CD4-positive, alpha-beta memory T cell (primary cell): ENCODE measurements at regions of chr5 and their contacts with region 1.

Region 1: DNA sequence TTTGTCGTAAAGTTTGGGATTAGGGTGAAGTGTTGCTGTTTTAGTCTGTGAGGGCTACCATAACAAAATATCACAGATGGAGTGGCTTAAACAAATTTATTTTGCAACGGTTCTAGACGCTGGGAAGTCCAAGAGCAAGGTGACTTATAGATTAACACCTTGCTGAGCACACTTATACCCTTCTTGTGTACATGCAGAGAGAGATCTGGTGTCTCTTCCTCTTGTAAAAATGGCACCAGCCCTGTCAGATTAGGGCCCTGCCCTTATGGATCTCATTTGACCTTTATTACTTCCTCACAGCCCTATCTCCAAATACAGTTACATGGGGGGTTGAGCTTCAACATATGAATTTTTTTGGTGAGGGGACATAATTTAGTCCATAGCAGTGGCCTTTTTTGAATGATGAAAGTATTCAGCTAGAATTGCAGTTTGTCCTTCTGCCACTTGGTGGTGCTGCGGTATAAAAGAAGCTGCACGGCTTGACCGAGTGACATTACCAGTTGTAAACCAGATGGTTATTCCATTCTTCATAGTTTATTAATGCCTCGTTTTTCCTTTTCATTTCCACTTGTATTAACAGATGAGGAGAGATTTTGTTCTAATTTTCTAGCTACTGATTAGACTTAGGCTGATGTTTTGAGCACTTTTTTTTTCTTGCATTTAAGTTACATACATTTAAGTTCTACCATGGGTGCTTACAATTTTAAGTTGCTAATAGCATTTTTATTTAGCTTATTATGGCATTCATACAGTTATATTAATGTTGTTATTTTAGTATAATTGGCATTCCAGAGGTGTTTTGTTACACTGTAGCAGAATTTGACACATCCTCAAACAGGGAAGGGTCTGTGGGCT is 19.4 kb downstream of the DCP2 start:
- DNase-seq: peak; percentile 65 to 76 (median 71)
- H3K4me3 ChIP-seq: no peak overlapping the region
- H3K4me3 Mint-ChIP-seq: peak overlapping the region in 2 of 8 donors; percentile 19 to 57
- H3K27ac ChIP-seq: no peak overlapping the region
- H3K27ac Mint-ChIP-seq: peak overlapping the region in 5 of 7 donors; percentile 1 to 52 (median 17)
- H3K4me1 ChIP-seq: peaks cover 11% of the 10 kb centered on the region
- H3K4me1 Mint-ChIP-seq: peaks cover 20 to 41% (median 25%) of the 10 kb centered on the region in 4 donors
- H3K27me3 ChIP-seq: no peaks in the 10 kb centered on the region
- H3K27me3 Mint-ChIP-seq: no peaks in the 10 kb centered on the region

Region 2: GRCh38 chr5:112983363-112983762 is 12.6 kb before region 1 on chr5:
- CTCF ChIA-PET with region 1: interaction called, 51 read pairs
- POLR2A ChIA-PET with region 1: interaction called, 5 read pairs
- intact Hi-C with region 1: no loop called
- DNase-seq: no peak
- H3K4me3 ChIP-seq: no peak overlapping the region
- H3K4me3 Mint-ChIP-seq: no peak overlapping the region
- H3K27ac ChIP-seq: no peak overlapping the region
- H3K27ac Mint-ChIP-seq: peak overlapping the region in 4 of 7 donors; percentile 10 to 61 (median 22)
- H3K4me1 ChIP-seq: peaks cover 59% of the 10 kb centered on the region
- H3K4me1 Mint-ChIP-seq: peaks cover 49 to 74% (median 62%) of the 10 kb centered on the region in 4 donors
- H3K27me3 ChIP-seq: no peaks in the 10 kb centered on the region
- H3K27me3 Mint-ChIP-seq: no peaks in the 10 kb centered on the region

Region 3: DNA sequence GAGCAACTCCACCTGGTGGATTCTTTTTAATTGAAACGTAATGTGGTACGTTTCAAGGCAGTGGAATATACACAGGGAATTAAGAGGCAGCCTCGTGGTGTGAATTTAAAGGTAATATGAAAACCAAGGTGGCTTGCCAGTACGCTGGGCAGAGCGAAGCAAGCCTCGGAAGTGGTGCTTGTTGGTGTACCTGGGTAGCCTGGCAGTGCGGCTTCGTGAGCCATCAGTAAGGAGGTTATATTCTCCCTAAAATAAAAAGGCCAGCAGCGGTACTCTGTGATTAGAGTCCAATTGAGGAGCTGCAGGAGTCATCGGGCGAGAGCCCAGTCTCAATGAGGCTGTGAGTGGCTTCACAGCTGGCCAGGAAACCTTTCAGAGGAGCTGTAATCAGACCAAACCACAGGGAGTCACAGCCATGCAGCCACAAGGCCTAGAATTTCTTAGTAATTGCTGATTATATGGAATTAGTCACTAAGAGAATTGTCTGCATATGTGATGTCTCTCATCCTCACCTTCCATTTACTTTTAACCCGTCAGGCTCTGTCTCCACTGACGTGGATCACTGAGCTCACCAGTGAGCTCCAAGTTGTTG is 38.3 kb after region 1 on chr5:
- CTCF ChIA-PET with region 1: interaction called, 18 read pairs
- POLR2A ChIA-PET with region 1: interaction called, 3 read pairs
- intact Hi-C with region 1: loop called (anchors 5 kb)
- DNase-seq: no peak
- H3K4me3 ChIP-seq: no peak overlapping the region
- H3K4me3 Mint-ChIP-seq: no peak overlapping the region
- H3K27ac ChIP-seq: no peak overlapping the region
- H3K27ac Mint-ChIP-seq: peak overlapping the region in 2 of 7 donors; percentile 60 to 67
- H3K4me1 ChIP-seq: no peaks in the 10 kb centered on the region
- H3K4me1 Mint-ChIP-seq: peaks cover 8 to 26% (median 19%) of the 10 kb centered on the region in 4 donors
- H3K27me3 ChIP-seq: no peaks in the 10 kb centered on the region
- H3K27me3 Mint-ChIP-seq: no peaks in the 10 kb centered on the region

Region 4: GRCh38 chr5:113075019-113075418 is 79.0 kb after region 1 on chr5:
- CTCF ChIA-PET with region 1: interaction called, 24 read pairs
- POLR2A ChIA-PET with region 1: interaction called, 3 read pairs
- intact Hi-C with region 1: no loop called
- DNase-seq: no peak
- H3K4me3 ChIP-seq: no peak overlapping the region
- H3K4me3 Mint-ChIP-seq: no peak overlapping the region
- H3K27ac ChIP-seq: no peak overlapping the region
- H3K27ac Mint-ChIP-seq: no peak overlapping the region
- H3K4me1 ChIP-seq: no peaks in the 10 kb centered on the region
- H3K4me1 Mint-ChIP-seq: peaks cover 7 to 32% (median 20%) of the 10 kb centered on the region in 4 donors
- H3K27me3 ChIP-seq: no peaks in the 10 kb centered on the region
- H3K27me3 Mint-ChIP-seq: no peaks in the 10 kb centered on the region

Region 5: GRCh38 chr5:113330533-113331208 is 334.7 kb after region 1 on chr5:
- CTCF ChIA-PET with region 1: interaction called, 245 read pairs
- POLR2A ChIA-PET with region 1: interaction called, 9 read pairs
- intact Hi-C with region 1: loop called (anchors 1 kb)
- DNase-seq: peak; percentile 41 to 69 (median 65)
- H3K4me3 ChIP-seq: no peak overlapping the region
- H3K4me3 Mint-ChIP-seq: peak overlapping the region in 6 of 8 donors; percentile 0 to 49 (median 30)
- H3K27ac ChIP-seq: no peak overlapping the region
- H3K27ac Mint-ChIP-seq: peak overlapping the region in 3 of 7 donors; percentile 43 to 81 (median 77)
- H3K4me1 ChIP-seq: peaks cover 11% of the 10 kb centered on the region
- H3K4me1 Mint-ChIP-seq: peaks cover 10 to 20% (median 12%) of the 10 kb centered on the region in 4 donors
- H3K27me3 ChIP-seq: no peaks in the 10 kb centered on the region
- H3K27me3 Mint-ChIP-seq: no peaks in the 10 kb centered on the region

Region 6: GRCh38 chr5:113513384-113514288 is 517.6 kb after region 1 on chr5 and contains the start of gene YTHDC2:
- CTCF ChIA-PET with region 1: interaction called, 44 read pairs
- POLR2A ChIA-PET with region 1: no interaction called
- intact Hi-C with region 1: loop called (anchors 1 kb)
- DNase-seq: peak; percentile 86 to 89 (median 87)
- H3K4me3 ChIP-seq: peak within 1 kb of the TSS; percentile 53 to 68
- H3K4me3 Mint-ChIP-seq: peak within 1 kb of the TSS; percentile 93 to 97 (median 96)
- H3K27ac ChIP-seq: peak within 1 kb of the TSS; percentile 84
- H3K27ac Mint-ChIP-seq: peak within 1 kb of the TSS; percentile 88 to 98 (median 97)
- H3K4me1 ChIP-seq: peaks cover 32% of the 10 kb centered on the region
- H3K4me1 Mint-ChIP-seq: peaks cover 25 to 44% (median 34%) of the 10 kb centered on the region in 4 donors
- H3K27me3 ChIP-seq: no peaks in the 10 kb centered on the region
- H3K27me3 Mint-ChIP-seq: peaks cover 4 to 7% of the 10 kb centered on the region in 2 donors
- total RNA-seq, gene YTHDC2: 42.8 to 46.4 TPM